ENCODE measurements at regions of chr17 and their contacts with region 1.

Region 1: DNA sequence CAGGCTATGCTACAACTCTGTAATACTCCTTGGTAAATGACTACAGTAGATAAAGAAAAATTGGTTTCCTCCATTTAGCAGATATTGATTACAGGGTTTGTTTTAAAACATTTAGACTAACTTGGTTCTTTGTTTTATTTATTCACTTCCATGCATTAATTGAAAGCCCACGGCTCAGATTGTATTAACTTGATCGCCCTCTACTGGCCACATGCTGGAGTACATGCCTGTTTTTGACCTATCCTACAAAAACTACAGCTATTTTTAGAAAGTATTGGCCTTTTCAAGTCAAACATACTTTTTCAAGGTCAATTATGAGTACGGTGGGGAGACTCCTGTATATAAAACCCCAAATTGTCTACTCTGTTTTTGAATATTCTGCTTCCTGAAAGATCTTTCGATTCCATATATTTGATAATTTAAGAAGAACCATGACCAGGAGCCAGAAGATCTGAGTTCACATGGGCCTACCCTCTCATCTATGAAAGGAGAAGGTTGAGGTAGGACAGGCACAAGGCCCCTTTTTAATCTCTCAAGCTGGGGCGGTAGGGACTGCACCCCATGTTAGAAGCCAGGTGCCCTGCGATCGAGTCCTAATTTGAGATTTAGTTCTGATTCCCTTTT is 51.8 kb downstream of the CA10 start:
- DNase-seq: peak; percentile 36
- H3K4me3 Mint-ChIP-seq: no peak overlapping the region
- H3K27ac Mint-ChIP-seq: no peak overlapping the region
- H3K4me1 Mint-ChIP-seq: no peaks in the 10 kb centered on the region
- H3K27me3 Mint-ChIP-seq: no peaks in the 10 kb centered on the region

Region 2: DNA sequence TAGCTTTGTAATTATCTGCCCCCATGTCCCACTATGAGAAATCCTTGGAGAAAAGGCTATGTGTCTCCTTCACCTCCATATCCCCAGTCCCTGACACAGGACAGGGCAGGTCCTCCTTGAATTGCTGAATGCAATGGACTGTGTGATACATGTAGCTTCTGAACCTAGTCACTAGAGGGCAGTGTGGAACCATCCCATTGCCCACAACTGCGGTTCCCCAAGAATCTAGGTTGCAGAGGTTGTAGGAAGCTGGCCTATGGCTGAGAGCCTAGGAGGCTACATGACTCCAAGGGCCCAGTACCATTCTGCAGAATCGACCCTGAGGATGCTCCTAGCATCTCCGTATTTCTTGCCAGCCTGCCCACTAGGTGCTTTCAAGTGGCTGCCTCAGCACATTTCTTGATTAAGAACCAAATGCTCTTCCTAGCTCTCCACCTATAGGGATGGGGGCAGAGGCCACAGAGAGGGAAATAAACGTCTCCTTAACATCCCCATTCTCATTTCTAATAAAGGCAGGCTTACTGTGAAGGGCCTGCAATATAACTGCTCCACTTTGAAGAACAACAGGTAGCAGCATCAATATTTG is 342.3 kb before region 1 on chr17:
- CTCF ChIA-PET with region 1: interaction called, 24 read pairs
- POLR2A ChIA-PET with region 1: no interaction called
- DNase-seq: peak; percentile 54
- H3K4me3 Mint-ChIP-seq: no peak overlapping the region
- H3K27ac Mint-ChIP-seq: no peak overlapping the region
- H3K4me1 Mint-ChIP-seq: peaks cover 6% of the 10 kb centered on the region
- H3K27me3 Mint-ChIP-seq: peaks cover 11% of the 10 kb centered on the region

Region 3: DNA sequence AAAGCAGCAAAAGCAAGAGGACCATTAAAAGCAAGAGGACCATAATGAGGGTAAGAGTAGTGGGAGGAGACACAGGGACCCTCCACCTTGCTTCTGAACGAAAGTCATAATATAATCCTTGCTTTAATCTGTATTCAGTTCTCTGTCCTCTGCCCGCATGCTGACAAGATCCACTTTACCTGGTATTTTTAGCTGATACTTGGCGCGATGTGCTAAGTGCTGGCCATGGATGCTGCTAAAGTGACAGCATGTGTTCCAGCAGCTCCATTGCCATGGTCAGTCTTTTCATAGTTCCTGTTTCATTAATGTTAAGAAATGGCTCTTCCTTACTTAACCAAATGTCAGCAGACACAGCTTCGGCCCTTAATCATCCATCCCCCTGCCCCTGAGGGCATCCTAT is 35.0 kb before region 1 on chr17:
- CTCF ChIA-PET with region 1: no interaction called
- POLR2A ChIA-PET with region 1: no interaction called
- DNase-seq: no peak
- H3K4me3 Mint-ChIP-seq: no peak overlapping the region
- H3K27ac Mint-ChIP-seq: no peak overlapping the region
- H3K4me1 Mint-ChIP-seq: no peaks in the 10 kb centered on the region
- H3K27me3 Mint-ChIP-seq: no peaks in the 10 kb centered on the region

Region 4: GRCh38 chr17:52495646-52496045 is 388.9 kb after region 1 on chr17:
- CTCF ChIA-PET with region 1: no interaction called
- POLR2A ChIA-PET with region 1: no interaction called
- DNase-seq: no peak
- H3K4me3 Mint-ChIP-seq: no peak overlapping the region
- H3K27ac Mint-ChIP-seq: no peak overlapping the region
- H3K4me1 Mint-ChIP-seq: no peaks in the 10 kb centered on the region
- H3K27me3 Mint-ChIP-seq: no peaks in the 10 kb centered on the region

Measured in activated CD4-positive, alpha-beta memory T cell treated with anti-CD3 and anti-CD28 coated beads, Interleukin-2, amount 10 ng/mL, durations not matched to agents 7 days and 5 days (primary cell).